Heart left ventricle (tissue), 16 donors: ENCODE measurements at regions of chr17 and their contacts with region 1.

Region 1: DNA sequence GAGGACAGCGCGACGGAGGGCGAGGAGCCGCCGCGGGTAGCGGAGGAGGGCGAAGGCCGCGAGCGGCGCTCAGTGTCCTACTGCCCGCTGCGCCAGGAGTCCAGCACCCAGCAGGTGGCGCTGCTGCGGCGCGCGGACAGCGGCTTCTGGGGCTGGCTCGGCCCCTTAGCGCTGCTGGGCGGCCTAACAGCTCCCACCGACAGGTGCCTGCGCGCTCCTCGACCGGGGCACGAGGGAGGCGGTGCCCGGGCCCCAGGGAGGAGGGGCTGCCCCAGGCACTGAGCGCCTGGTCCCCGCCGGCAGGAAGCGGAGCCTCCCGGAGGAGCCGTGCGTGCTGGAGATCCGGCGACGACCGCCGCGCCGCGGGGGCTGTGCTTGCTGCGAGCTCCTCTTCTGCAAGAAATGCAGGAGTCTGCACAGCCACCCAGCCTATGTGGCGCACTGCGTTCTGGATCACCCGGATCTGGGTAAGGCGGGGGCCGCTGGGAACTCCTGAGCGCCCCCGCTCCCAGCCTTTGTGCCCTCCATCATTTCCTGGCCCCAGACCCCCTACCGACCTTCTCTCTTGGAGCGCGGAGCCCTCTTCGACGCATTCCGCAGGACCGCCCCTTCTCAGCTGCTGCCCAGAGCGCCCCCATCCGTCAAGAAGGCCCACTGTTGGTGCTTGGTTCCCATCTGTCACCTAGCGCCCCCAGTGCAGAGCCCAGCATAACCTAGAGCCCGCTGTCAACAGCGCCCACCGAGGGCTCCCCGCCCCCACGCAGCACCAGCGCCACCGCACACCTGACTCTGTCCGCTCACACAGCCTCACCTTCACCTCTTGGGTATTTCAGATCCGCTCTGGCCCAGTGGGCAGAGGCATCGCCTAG is 3.7 kb downstream of the C17orf50 start:
- DNase-seq: peak; percentile 83 to 94 (median 85)
- ATAC-seq: peak; percentile 75 to 98 (median 95)
- H3K4me3 ChIP-seq: peak overlapping the region; percentile 9 to 67 (median 57)
- H3K27ac ChIP-seq: peak overlapping the region in 4 of 12 donors; percentile 3 to 42 (median 12)
- H3K4me1 ChIP-seq: peaks cover 0 to 15% (median 9%) of the 10 kb centered on the region in 12 donors
- H3K27me3 ChIP-seq: no peaks in the 10 kb centered on the region
- CTCF ChIP-seq: peak; percentile 85 to 98 (median 96)
- POLR2A ChIP-seq: peak in 1 of 2 donors; percentile 21

Region 2: GRCh38 chr17:35801583-35802224 is 37.3 kb after region 1 on chr17:
- intact Hi-C with region 1: loop called (anchors 1 to 2 kb)
- DNase-seq: peak; percentile 79 to 88 (median 87)
- ATAC-seq: peak; percentile 34 to 76 (median 54)
- H3K4me3 ChIP-seq: no peak overlapping the region
- H3K27ac ChIP-seq: peak overlapping the region in 7 of 12 donors; percentile 1 to 59 (median 28)
- H3K4me1 ChIP-seq: peaks cover 3 to 41% (median 28%) of the 10 kb centered on the region in 12 donors
- H3K27me3 ChIP-seq: peaks cover 0 to 2% (median 0%) of the 10 kb centered on the region in 9 donors
- CTCF ChIP-seq: no peak
- POLR2A ChIP-seq: no peak

Region 3: DNA sequence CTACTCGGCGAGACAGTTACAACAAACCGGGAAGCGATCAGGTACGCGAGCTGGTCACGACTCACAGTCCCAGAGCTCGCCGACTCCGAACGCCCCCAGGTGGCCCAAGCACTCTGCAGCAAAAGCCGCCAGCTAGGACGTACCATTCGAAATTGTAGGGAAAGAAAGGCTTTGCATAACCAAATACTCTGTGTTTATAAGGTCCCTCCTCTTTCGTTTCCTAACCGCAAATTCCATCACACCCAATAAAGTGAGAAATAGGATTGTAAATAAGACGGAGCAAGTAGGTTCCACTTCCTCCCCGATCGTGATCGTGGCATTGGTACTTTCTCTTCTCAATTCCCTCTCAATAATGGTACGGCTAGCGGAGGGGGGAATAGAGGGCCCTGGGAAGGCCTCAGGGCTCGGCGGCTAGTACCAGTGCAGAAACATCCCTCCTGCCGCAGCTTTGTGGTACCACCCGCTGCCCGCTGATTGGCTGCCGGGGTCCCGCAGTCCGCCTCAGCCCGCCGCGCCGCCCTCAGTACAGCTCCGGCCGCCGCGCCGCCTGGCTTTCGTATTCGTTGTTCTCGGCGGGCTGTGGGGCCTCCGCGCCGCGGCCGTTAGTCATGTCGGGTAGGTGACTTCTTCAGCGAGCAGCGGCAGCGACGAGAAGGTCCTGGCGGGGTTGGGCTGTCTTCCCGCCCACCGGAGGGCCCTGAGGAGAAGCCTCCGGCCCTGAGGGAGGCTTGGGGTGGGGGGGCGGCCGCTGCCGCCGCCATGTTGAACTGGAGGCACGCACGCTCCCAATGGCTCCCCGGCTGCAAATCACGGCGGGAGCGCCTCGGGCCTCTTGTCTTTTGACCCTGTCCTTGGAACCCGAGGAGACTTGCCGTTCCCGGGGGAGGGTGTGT is 44.9 kb after region 1 on chr17 and contains the start of gene TAF15:
- intact Hi-C with region 1: loop called (anchors 1 to 2 kb)
- DNase-seq: peak; percentile 95 to 98 (median 97)
- ATAC-seq: peak; percentile 97 to 100 (median 98)
- H3K4me3 ChIP-seq: peak within 1 kb of the TSS; percentile 58 to 96 (median 84)
- H3K27ac ChIP-seq: peak within 1 kb of the TSS; percentile 76 to 99 (median 94)
- H3K4me1 ChIP-seq: peaks cover 0 to 49% (median 29%) of the 10 kb centered on the region in 12 donors
- H3K27me3 ChIP-seq: no peaks in the 10 kb centered on the region
- CTCF ChIP-seq: peak; percentile 47 to 97 (median 72)
- POLR2A ChIP-seq: peak; percentile 90 to 97
- total RNA-seq, gene TAF15: 30.1 to 151 (median 121) TPM